Activated T-helper 2 cell treated with anti-CD3 and anti-CD28 coated beads, Interferon-gamma antibody, Interleukin-2, Interleukin-4, amounts not matched to agents 10 μg/mL and 5 μg/mL and 100 μg/mL, durations not matched to agents 14 hours and 24 hours and 36 hours (primary cell): ENCODE measurements at regions of chr12 and their contacts with region 1.

Region 1: GRCh38 chr12:32455607-32456071 is 56.3 kb downstream of the FGD4 start:
- DNase-seq: no peak
- H3K4me3 Mint-ChIP-seq: no peak overlapping the region
- H3K27ac Mint-ChIP-seq: no peak overlapping the region
- H3K4me1 Mint-ChIP-seq: peaks cover 2% of the 10 kb centered on the region
- H3K27me3 Mint-ChIP-seq: peaks cover 2% of the 10 kb centered on the region

Region 2: GRCh38 chr12:32482226-32482625 is 26.6 kb after region 1 on chr12:
- intact Hi-C with region 1: no loop called
- DNase-seq: no peak
- H3K4me3 Mint-ChIP-seq: no peak overlapping the region
- H3K27ac Mint-ChIP-seq: no peak overlapping the region
- H3K4me1 Mint-ChIP-seq: peaks cover 4% of the 10 kb centered on the region
- H3K27me3 Mint-ChIP-seq: peaks cover 16% of the 10 kb centered on the region

Region 3: GRCh38 chr12:32501835-32502333 is 46.2 kb after region 1 on chr12:
- intact Hi-C with region 1: no loop called
- DNase-seq: no peak
- H3K4me3 Mint-ChIP-seq: no peak overlapping the region
- H3K27ac Mint-ChIP-seq: peak overlapping the region; percentile 8
- H3K4me1 Mint-ChIP-seq: peaks cover 7% of the 10 kb centered on the region
- H3K27me3 Mint-ChIP-seq: peaks cover 5% of the 10 kb centered on the region

Region 4: DNA sequence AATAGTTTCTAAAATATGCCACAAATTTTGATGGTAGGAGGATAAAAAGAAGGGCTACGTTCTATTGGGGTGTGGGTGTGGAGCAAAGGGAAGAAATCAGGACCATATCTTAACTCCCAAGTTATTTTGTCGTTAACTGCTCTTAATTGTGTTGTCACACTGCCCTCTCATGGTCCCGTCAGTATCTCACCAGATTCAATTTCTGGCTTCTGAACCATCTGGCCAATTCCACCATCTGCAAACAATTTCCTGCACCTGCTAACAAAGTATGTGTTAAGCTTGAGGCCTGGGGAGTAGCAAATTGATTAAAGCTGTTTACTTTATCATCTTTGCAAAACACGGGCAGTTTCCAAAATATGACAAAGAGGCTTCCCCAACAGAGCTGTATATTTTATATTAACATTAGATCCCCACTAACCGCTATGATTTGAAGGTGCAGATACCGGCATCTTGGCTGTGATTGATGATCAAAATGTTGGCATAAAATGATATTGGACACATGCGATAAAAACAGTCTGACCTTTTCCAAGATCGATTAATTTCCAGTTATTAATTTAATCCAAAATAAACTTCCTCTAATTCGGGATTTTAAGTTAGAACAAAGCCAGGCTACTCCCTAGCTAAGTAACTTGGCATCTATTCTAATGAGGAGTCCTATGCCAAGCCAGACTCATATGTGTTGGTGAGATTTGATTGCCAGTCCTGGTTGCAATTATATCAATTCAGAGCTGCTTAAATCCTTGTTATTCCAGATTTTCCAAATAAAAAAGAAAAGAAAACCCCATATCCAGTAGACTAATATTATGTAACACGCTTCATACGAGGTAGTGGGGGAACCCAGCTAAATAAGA is 216.5 kb after region 1 on chr12:
- intact Hi-C with region 1: loop called (anchors 1 kb)
- DNase-seq: no peak
- H3K4me3 Mint-ChIP-seq: no peak overlapping the region
- H3K27ac Mint-ChIP-seq: no peak overlapping the region
- H3K4me1 Mint-ChIP-seq: peaks cover 2% of the 10 kb centered on the region
- H3K27me3 Mint-ChIP-seq: peaks cover 2% of the 10 kb centered on the region

Region 5: GRCh38 chr12:34022079-34022830 is 1566.6 kb after region 1 on chr12 and contains the start of gene ALG10:
- intact Hi-C with region 1: loop called (anchors 2 kb)
- DNase-seq: peak; percentile 95
- H3K4me3 Mint-ChIP-seq: peak within 1 kb of the TSS; percentile 97
- H3K27ac Mint-ChIP-seq: peak within 1 kb of the TSS; percentile 95
- H3K4me1 Mint-ChIP-seq: peaks cover 25% of the 10 kb centered on the region
- H3K27me3 Mint-ChIP-seq: no peaks in the 10 kb centered on the region
- total RNA-seq, gene ALG10: 18.7 and 20.4 TPM in 2 replicates